Calu3 (cell line): ENCODE measurements at regions of chr12 and their contacts with region 1.

Region 1: DNA sequence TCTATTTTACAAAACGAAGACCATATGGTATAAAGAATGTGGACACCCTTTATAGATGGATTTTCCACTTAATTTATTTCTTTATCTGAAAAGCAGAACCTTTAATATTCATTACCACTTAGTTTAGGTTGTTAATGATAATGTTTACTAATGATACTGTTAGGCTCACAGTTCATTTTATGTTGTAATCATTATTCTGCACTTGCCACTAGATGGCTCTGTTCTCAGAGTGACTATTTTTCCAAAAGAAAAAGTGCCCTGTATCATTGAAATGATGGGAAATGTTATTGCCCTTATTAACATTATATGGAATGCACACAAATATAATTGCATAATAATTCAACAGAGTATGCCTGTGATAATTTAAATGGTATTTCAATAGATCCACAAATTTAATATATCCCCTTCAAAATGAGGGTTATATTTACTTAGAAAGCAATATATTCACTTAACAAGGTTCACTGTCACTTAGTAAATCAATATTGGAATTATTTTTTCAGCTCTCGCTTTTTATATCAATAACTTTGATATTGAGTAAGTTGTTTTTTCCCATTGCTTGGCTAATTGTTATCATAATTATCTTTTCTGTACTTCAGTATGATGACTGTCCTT is 95.7 kb downstream of the PDE3A start:
- DNase-seq: peak; percentile 11
- H3K4me3 Mint-ChIP-seq: no peak overlapping the region
- H3K27ac Mint-ChIP-seq: no peak overlapping the region
- H3K4me1 Mint-ChIP-seq: no peaks in the 10 kb centered on the region
- H3K27me3 Mint-ChIP-seq: no peaks in the 10 kb centered on the region
- CTCF ChIP-seq: peak; percentile 11

Region 2: DNA sequence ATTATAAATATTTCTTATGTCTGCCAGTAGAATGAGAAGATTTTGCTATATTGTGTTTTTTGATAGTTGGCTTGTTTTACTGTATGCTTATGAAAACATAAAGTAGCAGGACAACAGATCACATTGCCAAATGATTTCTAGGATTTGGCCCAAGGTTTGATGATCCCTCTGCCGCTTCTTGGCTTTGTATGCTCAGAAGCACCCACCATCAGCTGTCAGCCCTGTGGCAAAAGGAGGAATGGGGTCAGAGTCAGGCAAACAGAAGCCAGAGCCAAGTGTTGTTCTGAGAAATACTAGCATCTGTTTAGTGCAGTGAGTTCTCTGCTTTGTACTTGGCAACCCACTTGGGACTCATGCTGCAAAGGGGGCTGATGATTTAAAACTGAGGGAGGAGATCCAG is 56.5 kb after region 1 on chr12:
- CTCF ChIA-PET with region 1: no interaction called
- intact Hi-C with region 1: no loop called
- DNase-seq: no peak
- H3K4me3 Mint-ChIP-seq: no peak overlapping the region
- H3K27ac Mint-ChIP-seq: no peak overlapping the region
- H3K4me1 Mint-ChIP-seq: peaks cover 7% of the 10 kb centered on the region
- H3K27me3 Mint-ChIP-seq: no peaks in the 10 kb centered on the region
- CTCF ChIP-seq: no peak

Region 3: GRCh38 chr12:20549107-20549719 is 85.2 kb after region 1 on chr12:
- CTCF ChIA-PET with region 1: no interaction called
- intact Hi-C with region 1: loop called (anchors 10 kb)
- DNase-seq: peak; percentile 31
- H3K4me3 Mint-ChIP-seq: no peak overlapping the region
- H3K27ac Mint-ChIP-seq: no peak overlapping the region
- H3K4me1 Mint-ChIP-seq: no peaks in the 10 kb centered on the region
- H3K27me3 Mint-ChIP-seq: no peaks in the 10 kb centered on the region
- CTCF ChIP-seq: peak; percentile 43